ENCODE measurements at regions of chr16 and their contacts with region 1.

Region 1: DNA sequence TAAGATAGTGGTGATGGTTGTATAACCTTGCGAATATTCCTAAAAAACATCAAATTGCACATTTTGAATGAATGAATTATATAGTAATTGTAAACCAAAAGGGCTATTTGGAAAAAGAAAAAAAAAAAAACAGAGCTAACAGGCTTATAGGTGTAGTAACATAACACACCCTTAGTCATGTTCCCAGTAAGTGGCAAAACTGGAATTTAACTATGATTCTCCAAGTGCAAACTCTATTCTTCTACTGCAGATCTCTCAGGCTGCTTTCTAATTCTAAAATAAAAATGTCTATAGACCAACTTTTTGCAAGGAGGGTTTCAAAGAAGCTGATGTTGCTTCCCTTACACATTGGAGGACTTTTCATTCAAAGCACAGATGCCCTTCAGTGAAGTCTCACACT is 293.2 kb upstream of the MON1B start:
- DNase-seq: no peak
- ATAC-seq: no peak
- H3K4me3 ChIP-seq: no peak overlapping the region
- H3K27ac ChIP-seq: no peak overlapping the region
- H3K4me1 ChIP-seq: no peaks in the 10 kb centered on the region
- H3K27me3 ChIP-seq: no peaks in the 10 kb centered on the region
- CTCF ChIP-seq: no peak

Region 2: DNA sequence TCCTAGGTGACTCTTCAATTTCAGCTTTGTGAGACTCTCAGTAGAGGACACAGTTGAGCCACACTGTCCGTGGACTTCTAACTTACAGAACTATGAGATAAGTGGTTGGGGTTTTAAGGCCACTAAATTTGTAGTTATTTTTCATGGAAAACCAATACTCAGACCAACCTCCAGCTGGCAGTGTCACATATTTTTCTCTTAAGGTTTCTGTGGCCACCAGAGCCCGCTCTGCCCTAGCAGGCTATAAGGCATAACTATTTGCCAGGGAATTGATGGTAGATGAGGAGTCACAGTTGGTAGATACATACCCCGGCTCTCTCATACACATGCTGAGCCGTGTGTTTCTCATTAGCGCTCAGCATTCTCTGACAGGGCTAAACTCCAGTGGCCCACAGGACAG is 43.6 kb before region 1 on chr16:
- intact Hi-C with region 1: no loop called
- DNase-seq: no peak
- ATAC-seq: no peak
- H3K4me3 ChIP-seq: no peak overlapping the region
- H3K27ac ChIP-seq: no peak overlapping the region
- H3K4me1 ChIP-seq: no peaks in the 10 kb centered on the region
- H3K27me3 ChIP-seq: no peaks in the 10 kb centered on the region
- CTCF ChIP-seq: no peak

Region 3: GRCh38 chr16:76875898-76876297 is 21.9 kb before region 1 on chr16:
- intact Hi-C with region 1: no loop called
- DNase-seq: no peak
- ATAC-seq: no peak
- H3K4me3 ChIP-seq: no peak overlapping the region
- H3K27ac ChIP-seq: no peak overlapping the region
- H3K4me1 ChIP-seq: no peaks in the 10 kb centered on the region
- H3K27me3 ChIP-seq: no peaks in the 10 kb centered on the region
- CTCF ChIP-seq: no peak

Region 4: DNA sequence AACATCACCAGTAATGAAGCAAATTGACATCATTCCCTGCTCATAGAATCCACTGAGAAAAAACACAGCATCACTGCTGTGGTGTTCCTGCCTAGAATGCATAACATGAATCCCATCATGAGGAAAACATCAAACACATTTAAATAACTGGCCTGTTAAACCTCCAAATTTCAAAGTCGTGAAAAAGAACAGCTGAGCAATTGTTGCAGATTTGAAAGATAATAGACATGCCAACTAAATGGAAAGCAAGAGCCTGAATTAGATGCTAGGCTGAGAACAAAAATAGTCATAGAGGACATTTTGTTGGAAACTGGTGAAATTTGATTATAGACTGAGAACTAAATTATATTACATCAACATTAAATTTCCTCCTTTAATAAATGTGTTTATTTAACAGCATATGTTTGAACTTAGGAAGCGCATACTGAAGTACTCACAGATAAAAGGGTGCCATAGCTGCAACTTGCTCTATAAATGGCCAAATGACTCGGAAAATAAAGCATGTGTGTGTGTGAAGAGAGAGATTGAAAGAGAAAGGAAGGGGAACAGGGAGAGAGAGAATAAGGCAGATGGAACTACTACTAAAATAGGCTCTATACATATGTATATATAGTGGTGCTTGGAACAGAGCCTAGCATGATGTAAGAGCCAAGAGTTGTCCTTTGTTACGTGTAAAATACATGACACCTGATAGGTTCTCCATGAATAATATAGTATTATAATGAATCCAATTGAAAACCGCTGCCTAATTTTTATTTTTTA is 11.9 kb before region 1 on chr16:
- intact Hi-C with region 1: loop called in 1 of 2 experiments (anchors 1 kb)
- DNase-seq: no peak
- ATAC-seq: no peak
- H3K4me3 ChIP-seq: no peak overlapping the region
- H3K27ac ChIP-seq: no peak overlapping the region
- H3K4me1 ChIP-seq: no peaks in the 10 kb centered on the region
- H3K27me3 ChIP-seq: no peaks in the 10 kb centered on the region
- CTCF ChIP-seq: no peak

Region 5: GRCh38 chr16:76985392-76986045 is 87.7 kb after region 1 on chr16:
- intact Hi-C with region 1: no loop called
- DNase-seq: no peak
- ATAC-seq: no peak
- H3K4me3 ChIP-seq: no peak overlapping the region
- H3K27ac ChIP-seq: no peak overlapping the region
- H3K4me1 ChIP-seq: no peaks in the 10 kb centered on the region
- H3K27me3 ChIP-seq: no peaks in the 10 kb centered on the region
- CTCF ChIP-seq: no peak

Measured in psoas muscle (tissue), 8 donors.